ENCODE measurements at regions of chr11 and their contacts with region 1.

Region 1: GRCh38 chr11:118572061-118572980 is at the start of gene ARCN1:
- DNase-seq: peak; percentile 87
- H3K4me3 Mint-ChIP-seq: peak within 1 kb of the TSS; percentile 87
- H3K27ac Mint-ChIP-seq: peak within 1 kb of the TSS; percentile 92
- H3K4me1 Mint-ChIP-seq: peaks cover 52% of the 10 kb centered on the region
- H3K27me3 Mint-ChIP-seq: no peaks in the 10 kb centered on the region
- total RNA-seq, gene ARCN1: 180 to 182 TPM

Region 2: GRCh38 chr11:118530408-118531339 is 41.6 kb before region 1 on chr11 and contains the start of gene TMEM25:
- CTCF ChIA-PET with region 1: no interaction called
- POLR2A ChIA-PET with region 1: no interaction called
- intact Hi-C with region 1: loop called (anchors 2 kb)
- DNase-seq: peak; percentile 84
- H3K4me3 Mint-ChIP-seq: peak within 1 kb of the TSS; percentile 92
- H3K27ac Mint-ChIP-seq: peak within 1 kb of the TSS; percentile 74
- H3K4me1 Mint-ChIP-seq: peaks cover 28% of the 10 kb centered on the region
- H3K27me3 Mint-ChIP-seq: no peaks in the 10 kb centered on the region
- total RNA-seq, gene TMEM25: 9.5 to 13.0 TPM

Region 3: DNA sequence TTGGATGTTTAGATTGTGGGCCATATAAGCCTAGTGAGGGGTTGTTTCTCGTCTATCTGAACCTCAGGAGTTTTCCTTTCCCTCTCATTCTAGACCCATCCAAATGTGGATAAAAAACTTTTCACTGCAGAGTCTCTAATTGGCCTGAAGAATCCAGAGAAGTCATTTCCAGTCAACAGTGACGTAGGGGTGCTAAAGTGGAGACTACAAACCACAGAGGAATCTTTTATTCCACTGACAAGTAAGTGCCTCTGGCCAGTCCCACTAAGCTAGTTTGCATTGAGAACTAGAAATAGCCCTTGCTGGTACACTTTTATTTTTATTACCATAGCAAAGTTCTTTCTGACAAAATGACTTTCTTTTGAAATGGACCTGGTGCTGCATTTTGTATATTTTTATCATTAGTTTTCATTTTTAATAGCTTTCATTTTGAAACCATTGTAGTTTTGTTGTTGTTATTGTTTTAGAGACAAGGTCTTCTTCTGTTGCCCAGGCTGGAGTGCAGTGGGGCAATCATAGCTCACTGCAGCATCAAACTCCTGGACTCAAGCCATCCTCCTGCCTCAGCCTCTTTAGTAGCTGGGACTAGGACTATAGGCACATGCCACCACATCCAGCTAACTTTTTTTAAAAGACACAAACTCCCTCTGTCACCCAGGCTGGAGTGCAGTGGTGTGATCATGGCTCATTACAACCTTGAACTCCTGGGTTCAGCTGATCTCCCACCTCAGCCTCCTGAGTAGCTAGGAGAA is 20.5 kb after region 1 on chr11:
- CTCF ChIA-PET with region 1: interaction called, 5 read pairs
- POLR2A ChIA-PET with region 1: no interaction called
- intact Hi-C with region 1: loop called (anchors 2 kb)
- DNase-seq: no peak
- H3K4me3 Mint-ChIP-seq: no peak overlapping the region
- H3K27ac Mint-ChIP-seq: no peak overlapping the region
- H3K4me1 Mint-ChIP-seq: peaks cover 14% of the 10 kb centered on the region
- H3K27me3 Mint-ChIP-seq: no peaks in the 10 kb centered on the region

Region 4: DNA sequence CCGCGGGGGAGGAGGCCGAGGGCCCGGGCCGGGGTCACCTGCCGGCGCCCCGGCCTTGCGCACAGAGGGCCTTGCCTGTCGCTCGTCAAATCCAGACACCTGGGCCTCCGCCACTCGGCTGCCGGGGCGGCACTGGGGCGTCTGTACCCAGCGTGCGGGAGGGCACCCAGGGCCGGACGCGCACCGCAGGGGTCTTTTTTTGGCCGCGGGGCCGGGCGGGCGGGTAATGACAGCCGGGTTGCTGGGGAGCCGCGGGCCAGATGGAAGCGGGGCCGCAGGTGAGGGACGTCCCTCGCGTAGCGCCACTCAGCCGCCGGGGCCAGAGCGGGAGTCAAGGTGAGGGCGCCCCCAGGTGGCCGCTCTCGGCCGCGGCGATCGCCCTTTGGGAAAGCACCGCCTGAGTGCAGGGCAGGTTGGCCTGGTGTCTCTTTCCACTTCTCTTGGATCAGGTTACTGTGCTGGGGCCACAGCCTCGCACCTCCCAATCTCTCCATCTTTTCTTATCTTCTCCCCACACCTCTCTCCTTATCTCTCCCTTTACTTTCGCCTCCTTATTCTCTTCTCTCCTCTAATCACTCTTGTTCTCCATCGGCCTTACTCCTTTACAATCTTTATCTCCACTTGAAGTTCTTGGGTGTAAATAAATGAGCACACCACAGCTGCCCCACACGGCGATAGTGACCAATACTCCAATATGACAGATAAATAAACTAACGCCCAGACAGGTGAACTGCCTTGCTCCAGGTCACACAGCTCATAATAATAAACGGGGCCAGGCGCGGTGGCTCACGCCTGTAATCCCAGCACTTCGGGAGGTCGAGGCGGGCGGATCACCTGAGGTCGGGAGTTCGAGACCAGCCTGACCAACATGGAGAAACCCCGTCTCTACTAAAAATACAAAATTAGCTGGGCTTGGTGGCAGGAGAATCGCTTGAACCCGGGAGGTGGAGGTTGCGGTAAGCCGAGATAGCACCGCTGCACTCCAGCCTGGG is 38.8 kb after region 1 on chr11:
- CTCF ChIA-PET with region 1: interaction called, 6 read pairs
- POLR2A ChIA-PET with region 1: interaction called, 5 read pairs
- intact Hi-C with region 1: loop called (anchors 1 kb)
- DNase-seq: peak; percentile 90
- H3K4me3 Mint-ChIP-seq: peak overlapping the region; percentile 14
- H3K27ac Mint-ChIP-seq: no peak overlapping the region
- H3K4me1 Mint-ChIP-seq: peaks cover 22% of the 10 kb centered on the region
- H3K27me3 Mint-ChIP-seq: peaks cover 12% of the 10 kb centered on the region